BJ (cell line): ENCODE measurements at regions of chr2 and their contacts with region 1.

Region 1: DNA sequence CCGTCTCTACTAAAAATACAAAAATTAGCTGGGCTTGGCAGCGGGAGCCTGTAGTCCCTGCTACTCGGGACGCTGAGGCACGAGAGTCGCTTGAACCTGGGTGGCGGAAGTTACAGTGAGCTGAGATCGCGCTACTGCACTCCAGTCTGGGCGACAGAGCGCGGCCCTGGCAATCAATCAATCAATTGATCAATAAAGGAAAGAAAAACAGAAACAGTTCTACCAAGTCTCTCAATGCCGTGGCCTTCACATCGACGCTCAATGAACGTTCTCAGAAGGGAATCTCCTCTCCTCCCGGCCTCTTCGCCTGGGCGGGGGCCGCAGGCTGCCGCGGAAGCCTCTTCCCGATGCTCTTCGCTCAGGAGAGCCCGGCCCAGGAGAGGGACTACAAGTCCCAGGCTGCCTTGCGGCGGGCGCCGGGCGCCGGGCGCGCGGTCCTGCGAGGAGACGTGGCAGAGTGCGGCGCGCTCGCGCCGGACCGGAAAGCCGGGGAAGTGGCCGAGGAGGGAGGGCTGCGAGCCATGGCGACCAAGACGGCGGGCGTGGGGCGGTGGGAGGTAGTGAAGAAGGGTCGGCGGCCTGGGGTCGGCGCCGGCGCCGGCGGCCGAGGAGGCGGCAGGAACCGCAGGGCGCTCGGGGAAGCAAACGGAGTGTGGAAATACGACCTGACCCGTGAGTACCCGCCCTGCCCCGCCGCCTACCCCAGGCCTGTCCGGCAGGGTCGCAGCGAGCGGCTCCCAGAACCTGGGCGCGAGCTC is at the start of gene TMEM214:
- DNase-seq: peak; percentile 51
- H3K4me3 ChIP-seq: peak within 1 kb of the TSS; percentile 92
- H3K27me3 ChIP-seq: no peaks in the 10 kb centered on the region
- CTCF ChIP-seq: peak; percentile 13; the same call in 1 of the 2 replicates
- polyA plus RNA-seq, gene TMEM214: 145 and 235 TPM in 2 replicates

Region 2: DNA sequence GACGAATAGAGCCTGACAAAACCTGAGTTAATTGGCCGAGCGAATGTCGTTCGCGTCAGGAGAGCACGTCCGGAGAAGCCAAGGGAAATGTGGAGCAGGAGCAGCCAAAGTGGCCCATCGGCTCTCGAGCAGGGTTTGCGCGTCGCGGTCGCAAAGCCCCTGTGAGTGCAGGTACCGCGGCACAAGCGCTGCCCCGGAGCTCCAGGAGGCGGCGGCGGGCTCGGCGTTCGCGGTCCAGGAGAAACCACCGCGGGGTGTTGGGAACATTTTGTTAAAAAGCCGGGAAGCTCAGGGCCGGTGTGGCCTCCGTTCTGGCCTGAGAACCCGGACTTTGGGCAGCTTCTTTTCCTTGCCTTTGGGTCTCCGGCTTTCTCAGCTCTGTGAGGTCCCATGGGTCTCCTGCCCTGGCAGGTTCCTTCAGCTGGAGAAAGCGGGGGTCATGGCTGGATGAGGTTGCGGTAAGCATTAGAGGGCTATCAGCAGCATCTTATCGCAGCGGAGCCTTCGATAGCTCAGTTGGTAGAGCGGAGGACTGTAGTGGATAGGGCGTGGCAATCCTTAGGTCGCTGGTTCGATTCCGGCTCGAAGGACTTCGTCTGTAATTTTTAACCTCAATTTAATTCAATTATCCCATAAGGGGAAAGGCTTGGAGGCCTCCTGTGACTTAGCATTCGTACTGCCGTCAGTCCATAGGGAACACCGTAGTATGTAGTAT is 17.8 kb after region 1 on chr2:
- CTCF ChIA-PET with region 1: interaction called, 13 read pairs
- POLR2A ChIA-PET with region 1: interaction called, 3 read pairs
- DNase-seq: no peak
- H3K4me3 ChIP-seq: peak overlapping the region; percentile 66
- H3K27me3 ChIP-seq: no peaks in the 10 kb centered on the region
- CTCF ChIP-seq: peak; percentile 53; the same call in 1 of the 2 replicates